Head of caudate nucleus (tissue), 42 donors: ENCODE measurements at regions of chr15 and their contacts with region 1.

Region 1: GRCh38 chr15:95486224-95486623 is 844.3 kb upstream of the NR2F2 start:
- DNase-seq: no peak

Region 2: GRCh38 chr15:95266451-95267061 is 219.7 kb before region 1 on chr15:
- intact Hi-C with region 1: no loop called
- DNase-seq: no peak

Region 3: GRCh38 chr15:95429345-95429744 is 56.9 kb before region 1 on chr15:
- intact Hi-C with region 1: loop called (anchors 10 kb)
- DNase-seq: no peak